Esophagus muscularis mucosa (tissue), 4 donors: ENCODE measurements at regions of chr15 and their contacts with region 1.

Region 1: GRCh38 chr15:78241007-78241406 is 6.6 kb upstream of the ACSBG1 start:
- DNase-seq: peak; percentile 96
- H3K4me3 ChIP-seq: no peak overlapping the region
- H3K27ac ChIP-seq: no peak overlapping the region
- H3K4me1 ChIP-seq: peaks cover 0 to 6% (median 5%) of the 10 kb centered on the region in 4 donors
- H3K27me3 ChIP-seq: no peaks in the 10 kb centered on the region
- CTCF ChIP-seq: peak; percentile 87 to 95 (median 88)
- EP300 ChIP-seq: no peak
- POLR2A ChIP-seq: no peak

Region 2: GRCh38 chr15:77959432-77959879 is 281.6 kb before region 1 on chr15:
- intact Hi-C with region 1: loop called (anchors 5 kb)
- DNase-seq: peak; percentile 95
- H3K4me3 ChIP-seq: peak overlapping the region; percentile 18 to 52 (median 26)
- H3K27ac ChIP-seq: no peak overlapping the region
- H3K4me1 ChIP-seq: peaks cover 4 to 10% (median 8%) of the 10 kb centered on the region in 4 donors
- H3K27me3 ChIP-seq: no peaks in the 10 kb centered on the region
- CTCF ChIP-seq: peak in 2 of 3 experiments; percentile 96
- EP300 ChIP-seq: no peak
- POLR2A ChIP-seq: no peak

Region 3: GRCh38 chr15:78177447-78177873 is 63.5 kb before region 1 on chr15:
- intact Hi-C with region 1: loop called (anchors 5 kb)
- DNase-seq: no peak
- H3K4me3 ChIP-seq: no peak overlapping the region
- H3K27ac ChIP-seq: no peak overlapping the region
- H3K4me1 ChIP-seq: no peaks in the 10 kb centered on the region
- H3K27me3 ChIP-seq: no peaks in the 10 kb centered on the region
- CTCF ChIP-seq: peak; percentile 55 to 63 (median 59)
- EP300 ChIP-seq: no peak
- POLR2A ChIP-seq: no peak